PC-3 (cell line): ENCODE measurements at regions of chr11 and their contacts with region 1.

Region 1: DNA sequence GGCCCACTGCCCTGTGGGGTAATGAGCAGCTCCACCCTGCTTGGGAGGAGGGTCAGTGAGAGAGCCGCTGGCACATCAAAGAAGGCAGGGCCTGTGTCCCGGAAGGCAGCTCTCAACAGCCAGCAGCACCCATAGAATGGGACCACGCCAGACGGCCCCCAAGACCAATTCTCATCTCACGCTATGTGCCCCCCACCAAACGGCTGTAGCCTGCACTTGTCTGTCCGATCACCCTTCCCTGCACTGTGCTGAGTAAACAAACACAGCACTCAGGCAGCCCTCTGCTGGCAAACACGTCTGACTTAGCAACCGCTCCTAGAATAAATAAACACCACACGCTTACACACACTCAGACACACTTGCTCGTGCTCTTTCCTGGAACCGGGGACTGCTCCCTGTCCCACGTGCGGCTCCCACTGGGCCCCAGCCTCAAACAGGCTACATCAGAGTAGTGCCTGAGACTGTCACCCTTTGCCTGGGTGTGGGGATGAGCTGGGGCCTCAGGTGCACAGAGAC is 53.2 kb upstream of the CDON start:
- DNase-seq: peak; percentile 88
- ATAC-seq: peak; percentile 87
- H3K4me3 ChIP-seq: peak overlapping the region; percentile 40; the same call in 1 of the 2 replicates
- H3K27ac ChIP-seq: no peak overlapping the region
- H3K4me1 ChIP-seq: peaks cover 37% of the 10 kb centered on the region
- H3K27me3 ChIP-seq: no peaks in the 10 kb centered on the region
- CTCF ChIP-seq: peak; percentile 50

Region 2: GRCh38 chr11:125923012-125923579 is 192.8 kb before region 1 on chr11:
- CTCF ChIA-PET with region 1: interaction called, 3 read pairs
- POLR2A ChIA-PET with region 1: no interaction called
- intact Hi-C with region 1: loop called (anchors 10 kb)
- DNase-seq: peak; percentile 94
- ATAC-seq: peak; percentile 86
- H3K4me3 ChIP-seq: no peak overlapping the region
- H3K27ac ChIP-seq: no peak overlapping the region
- H3K4me1 ChIP-seq: no peaks in the 10 kb centered on the region
- H3K27me3 ChIP-seq: peaks cover 6% of the 10 kb centered on the region; the same call in 1 of the 2 replicates
- CTCF ChIP-seq: peak; percentile 93

Region 3: GRCh38 chr11:126090452-126090851 is 25.4 kb before region 1 on chr11:
- CTCF ChIA-PET with region 1: interaction called, 4 read pairs
- POLR2A ChIA-PET with region 1: no interaction called
- intact Hi-C with region 1: loop called (anchors 1 kb)
- DNase-seq: no peak
- ATAC-seq: no peak
- H3K4me3 ChIP-seq: no peak overlapping the region
- H3K27ac ChIP-seq: no peak overlapping the region
- H3K4me1 ChIP-seq: peaks cover 11% of the 10 kb centered on the region
- H3K27me3 ChIP-seq: no peaks in the 10 kb centered on the region
- CTCF ChIP-seq: no peak

Region 4: GRCh38 chr11:126153972-126154371 is 38.1 kb after region 1 on chr11:
- CTCF ChIA-PET with region 1: no interaction called
- POLR2A ChIA-PET with region 1: no interaction called
- intact Hi-C with region 1: loop called (anchors 5 kb)
- DNase-seq: peak; percentile 46
- ATAC-seq: no peak
- H3K4me3 ChIP-seq: no peak overlapping the region
- H3K27ac ChIP-seq: no peak overlapping the region
- H3K4me1 ChIP-seq: peaks cover 10% of the 10 kb centered on the region
- H3K27me3 ChIP-seq: no peaks in the 10 kb centered on the region
- CTCF ChIP-seq: no peak